ENCODE measurements at regions of chr4 and their contacts with region 1.

Region 1: GRCh38 chr4:129641179-129641578 is 545.2 kb downstream of the C4orf33 start:
- DNase-seq: peak in 2 of 3 donors; percentile 29 to 58
- ATAC-seq: peak; percentile 84 to 94 (median 88)
- H3K4me3 ChIP-seq: no peak overlapping the region
- H3K27ac ChIP-seq: no peak overlapping the region
- H3K4me1 ChIP-seq: no peaks in the 10 kb centered on the region
- H3K27me3 ChIP-seq: no peaks in the 10 kb centered on the region
- CTCF ChIP-seq: peak; percentile 80 to 86 (median 84)
- POLR2A ChIP-seq: no peak

Region 2: DNA sequence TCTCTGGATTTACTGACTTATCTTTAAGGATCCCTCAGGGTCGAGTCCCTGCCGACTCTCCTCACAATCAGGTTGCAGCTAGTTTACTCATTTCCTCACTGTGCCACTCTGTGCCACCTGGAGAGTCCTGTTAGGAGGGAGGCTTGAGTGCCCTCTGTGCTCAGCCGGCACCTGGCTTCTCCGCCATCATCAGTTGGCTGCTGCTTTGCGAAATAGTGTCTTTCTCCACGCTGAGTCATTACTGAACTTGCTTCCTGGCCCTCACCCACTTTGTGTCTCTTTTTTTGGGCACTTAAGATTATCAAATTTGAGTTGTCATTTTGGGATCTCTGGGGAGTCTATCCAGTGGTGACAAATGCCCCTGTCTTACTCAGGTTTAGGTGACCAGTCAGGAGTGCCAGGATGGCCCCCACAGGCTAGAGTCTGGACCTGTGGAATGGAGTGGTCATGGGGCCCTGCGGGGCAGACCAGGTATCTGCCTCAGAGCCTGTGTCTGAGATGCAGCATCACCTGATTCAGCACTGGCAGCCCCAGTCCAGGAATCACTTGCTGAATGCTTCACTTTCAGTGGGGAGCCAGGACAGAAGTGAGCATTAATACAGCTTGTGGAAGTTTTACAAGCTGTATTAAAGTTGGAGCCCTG is 794.0 kb before region 1 on chr4:
- intact Hi-C with region 1: no loop called
- DNase-seq: no peak
- ATAC-seq: no peak
- H3K4me3 ChIP-seq: no peak overlapping the region
- H3K27ac ChIP-seq: peak overlapping the region in 1 of 3 donors; percentile 77
- H3K4me1 ChIP-seq: peaks cover 0 to 24% (median 8%) of the 10 kb centered on the region in 4 donors
- H3K27me3 ChIP-seq: no peaks in the 10 kb centered on the region
- CTCF ChIP-seq: no peak
- POLR2A ChIP-seq: no peak

Region 3: GRCh38 chr4:129362674-129363274 is 278.4 kb before region 1 on chr4:
- intact Hi-C with region 1: loop called in 1 of 2 experiments (anchors 10 kb)
- DNase-seq: peak in 2 of 3 donors; percentile 26 to 50
- ATAC-seq: peak; percentile 79 to 91 (median 82)
- H3K4me3 ChIP-seq: no peak overlapping the region
- H3K27ac ChIP-seq: no peak overlapping the region
- H3K4me1 ChIP-seq: no peaks in the 10 kb centered on the region
- H3K27me3 ChIP-seq: no peaks in the 10 kb centered on the region
- CTCF ChIP-seq: peak; percentile 73 to 91 (median 88)
- POLR2A ChIP-seq: no peak

Region 4: GRCh38 chr4:129526814-129527213 is 114.4 kb before region 1 on chr4:
- intact Hi-C with region 1: loop called in 1 of 2 experiments (anchors 10 kb)
- DNase-seq: no peak
- ATAC-seq: peak; percentile 53 to 82 (median 58)
- H3K4me3 ChIP-seq: no peak overlapping the region
- H3K27ac ChIP-seq: no peak overlapping the region
- H3K4me1 ChIP-seq: no peaks in the 10 kb centered on the region
- H3K27me3 ChIP-seq: no peaks in the 10 kb centered on the region
- CTCF ChIP-seq: peak; percentile 42 to 52 (median 46)
- POLR2A ChIP-seq: no peak